Dendritic cell treated with granulocyte-macrophage colony-stimulating factor and Interleukin-4, amounts not matched to agents 40 ng/mL and 50 ng/mL, for 4 days (primary cell): ENCODE measurements at regions of chr10 and their contacts with region 1.

Region 1: DNA sequence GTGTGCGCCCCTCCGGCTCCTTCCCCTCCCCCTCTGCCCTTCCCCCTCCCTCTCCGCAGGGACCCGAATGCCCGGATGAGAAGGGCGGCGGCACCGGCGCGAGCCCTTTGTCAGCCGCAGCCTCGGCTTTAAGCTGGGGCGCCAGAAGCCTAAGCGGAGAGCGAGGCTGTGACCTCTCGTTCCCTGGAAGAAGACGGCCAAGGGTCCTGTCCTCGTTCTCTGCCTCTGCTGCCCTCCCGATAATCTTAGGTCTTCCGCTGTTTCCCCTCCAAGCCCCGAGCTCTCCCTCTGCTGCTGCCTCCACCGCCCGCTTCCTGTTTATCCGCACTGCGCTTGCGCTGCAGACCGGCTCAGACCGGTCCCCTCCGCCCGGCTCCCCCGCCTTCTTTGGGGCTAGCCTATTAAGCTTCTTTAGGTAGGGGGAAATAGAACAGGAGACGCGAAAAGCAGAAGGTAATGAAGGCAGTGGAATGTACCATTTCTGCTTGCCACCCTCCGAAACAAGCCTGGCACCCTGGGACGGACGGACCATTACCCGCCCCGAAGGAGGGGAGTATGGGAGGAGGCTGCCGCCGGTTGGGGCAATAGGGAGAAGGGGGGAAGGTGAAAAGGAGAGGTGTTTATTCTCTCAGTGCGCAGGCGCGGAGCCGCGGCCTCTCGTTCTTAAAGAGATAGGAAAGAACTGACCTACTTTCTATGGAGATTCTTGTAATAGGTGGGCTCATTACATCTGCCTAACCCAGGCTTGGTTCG is at the start of gene OGA:
- H3K4me3 Mint-ChIP-seq: peak within 1 kb of the TSS; percentile 97
- H3K27ac Mint-ChIP-seq: peak within 1 kb of the TSS; percentile 99
- H3K4me1 Mint-ChIP-seq: peaks cover 37% of the 10 kb centered on the region
- H3K27me3 Mint-ChIP-seq: no peaks in the 10 kb centered on the region

Region 2: GRCh38 chr10:101782811-101783735 is 35.2 kb before region 1 on chr10 and contains the start of gene NPM3:
- intact Hi-C with region 1: loop called (anchors 5 kb)
- H3K4me3 Mint-ChIP-seq: peak within 1 kb of the TSS; percentile 100
- H3K27ac Mint-ChIP-seq: peak within 1 kb of the TSS; percentile 91
- H3K4me1 Mint-ChIP-seq: peaks cover 58% of the 10 kb centered on the region
- H3K27me3 Mint-ChIP-seq: peaks cover 24% of the 10 kb centered on the region

Region 3: GRCh38 chr10:101840741-101841453 is 22.6 kb after region 1 on chr10:
- intact Hi-C with region 1: loop called (anchors 2 kb)
- H3K4me3 Mint-ChIP-seq: peak overlapping the region; percentile 69
- H3K27ac Mint-ChIP-seq: no peak overlapping the region
- H3K4me1 Mint-ChIP-seq: peaks cover 57% of the 10 kb centered on the region
- H3K27me3 Mint-ChIP-seq: peaks cover 32% of the 10 kb centered on the region